ENCODE measurements at regions of chr6 and their contacts with region 1.

Region 1: DNA sequence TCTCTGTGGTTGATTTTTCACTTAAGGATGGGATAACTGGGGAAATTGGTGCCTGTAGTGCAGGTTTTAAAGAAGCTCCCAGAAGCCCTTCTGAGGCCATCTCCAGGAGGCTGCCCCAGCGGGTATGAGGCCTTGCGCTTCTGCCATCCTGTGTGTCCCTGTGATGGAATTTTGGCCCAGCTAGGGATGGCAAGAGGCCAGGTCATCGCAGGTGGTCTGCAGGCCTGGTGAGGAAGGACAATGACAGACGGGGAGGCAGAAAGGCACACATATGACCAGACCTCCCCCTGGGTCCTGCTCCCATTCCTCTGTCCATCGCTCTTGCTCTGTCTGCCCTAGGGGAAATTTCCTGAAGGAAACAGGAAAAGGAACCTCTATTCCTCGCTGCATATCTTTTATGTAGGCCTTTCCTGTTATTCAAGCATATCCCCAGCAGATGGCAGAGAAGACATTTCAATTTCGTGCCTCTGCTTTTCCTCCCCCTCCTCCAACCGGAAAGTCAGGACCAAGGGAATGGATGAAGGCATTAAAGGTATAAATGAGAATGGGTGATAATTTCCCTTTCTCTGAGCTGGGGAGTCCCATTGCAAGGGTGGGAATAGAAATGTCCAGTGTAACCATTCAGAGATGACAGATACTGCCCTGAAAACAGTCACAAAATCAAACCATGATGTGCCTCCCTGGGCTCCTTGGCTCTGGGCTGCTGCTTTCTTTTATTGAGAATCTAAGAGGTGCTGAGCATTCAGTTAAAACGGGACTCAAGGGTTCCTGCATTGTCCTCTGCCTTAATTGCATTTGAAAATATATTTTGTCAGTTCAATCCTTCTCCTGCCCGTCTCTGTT is 17.6 kb upstream of the HLA-F start:
- DNase-seq: peak in 4 of 14 experiments; percentile 29 to 70 (median 56)
- ATAC-seq: no peak
- H3K4me3 ChIP-seq: no peak overlapping the region
- H3K4me3 Mint-ChIP-seq: peak overlapping the region; percentile 63
- H3K27ac ChIP-seq: no peak overlapping the region
- H3K27ac Mint-ChIP-seq: peak overlapping the region; percentile 83
- H3K4me1 ChIP-seq: peaks cover 49% of the 10 kb centered on the region
- H3K4me1 Mint-ChIP-seq: peaks cover 57% of the 10 kb centered on the region
- H3K27me3 ChIP-seq: peaks cover 2 to 7% of the 10 kb centered on the region in 2 experiments
- H3K27me3 Mint-ChIP-seq: peaks cover 29% of the 10 kb centered on the region
- CTCF ChIP-seq: peak; percentile 90

Region 2: DNA sequence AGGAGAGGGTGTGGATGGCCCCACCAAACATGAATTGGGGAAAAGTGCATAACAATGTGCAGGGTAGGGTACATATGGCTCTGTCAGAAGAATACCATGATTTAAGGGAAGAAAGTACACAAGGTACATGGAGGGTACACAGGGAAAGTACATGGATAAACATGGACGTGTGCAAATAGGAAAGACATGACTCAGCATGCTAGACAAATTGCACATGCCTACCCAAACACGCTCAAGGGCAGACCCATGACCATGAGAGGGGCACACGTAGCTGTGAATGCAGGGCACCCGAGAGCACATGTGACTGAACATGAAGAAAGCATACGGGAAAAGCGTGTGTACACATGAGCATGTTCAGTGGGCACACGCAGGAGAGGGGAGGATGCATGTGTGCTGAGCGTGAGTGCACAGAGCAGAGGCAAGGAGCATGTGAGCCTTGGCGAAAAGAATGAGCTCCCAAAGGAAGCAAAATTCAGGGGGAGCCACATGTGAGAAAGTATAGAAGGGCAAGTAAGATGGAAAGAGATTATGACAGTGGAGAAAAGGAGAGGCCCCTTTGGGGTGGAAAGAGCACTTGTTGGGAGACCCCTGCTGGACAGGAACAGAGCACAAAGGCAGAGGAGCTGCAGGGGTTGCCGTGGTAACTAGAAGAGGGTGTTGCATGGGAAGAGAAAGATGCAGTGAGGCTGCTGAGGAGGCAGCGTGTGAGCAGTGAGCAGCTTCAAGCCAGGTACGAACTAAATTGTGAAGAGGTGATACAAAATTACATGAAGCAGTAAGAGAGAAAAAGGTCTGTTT is 102.8 kb before region 1 on chr6:
- CTCF ChIA-PET with region 1: no interaction called
- POLR2A ChIA-PET with region 1: no interaction called
- intact Hi-C with region 1: no loop called
- DNase-seq: peak in 2 of 14 experiments; percentile 6
- ATAC-seq: no peak
- H3K4me3 ChIP-seq: no peak overlapping the region
- H3K4me3 Mint-ChIP-seq: no peak overlapping the region
- H3K27ac ChIP-seq: no peak overlapping the region
- H3K27ac Mint-ChIP-seq: no peak overlapping the region
- H3K4me1 ChIP-seq: no peaks in the 10 kb centered on the region
- H3K4me1 Mint-ChIP-seq: no peaks in the 10 kb centered on the region
- H3K27me3 ChIP-seq: no peaks in the 10 kb centered on the region
- H3K27me3 Mint-ChIP-seq: no peaks in the 10 kb centered on the region
- CTCF ChIP-seq: no peak

Region 3: DNA sequence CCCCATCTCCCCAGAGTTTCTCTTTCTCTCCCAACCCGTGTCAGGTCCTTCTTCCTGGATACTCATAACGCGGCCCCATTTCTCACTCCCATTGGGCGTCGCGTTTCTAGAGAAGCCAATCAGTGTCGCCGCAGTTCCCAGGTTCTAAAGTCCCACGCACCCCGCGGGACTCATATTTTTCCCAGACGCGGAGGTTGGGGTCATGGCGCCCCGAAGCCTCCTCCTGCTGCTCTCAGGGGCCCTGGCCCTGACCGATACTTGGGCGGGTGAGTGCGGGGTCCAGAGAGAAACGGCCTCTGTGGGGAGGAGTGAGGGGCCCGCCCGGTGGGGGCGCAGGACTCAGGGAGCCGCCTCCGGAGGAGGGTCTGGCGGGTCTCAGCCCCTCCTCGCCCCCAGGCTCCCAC is 17.7 kb after region 1 on chr6 and contains the start of gene HLA-F:
- CTCF ChIA-PET with region 1: interaction called, 17 read pairs
- POLR2A ChIA-PET with region 1: interaction called, 65 read pairs
- intact Hi-C with region 1: no loop called
- DNase-seq: peak in 13 of 14 experiments; percentile 69 to 96 (median 79)
- ATAC-seq: peak; percentile 90
- H3K4me3 ChIP-seq: peak within 1 kb of the TSS; percentile 100
- H3K4me3 Mint-ChIP-seq: peak within 1 kb of the TSS; percentile 97
- H3K27ac ChIP-seq: peak within 1 kb of the TSS; percentile 99 to 100
- H3K27ac Mint-ChIP-seq: peak within 1 kb of the TSS; percentile 95
- H3K4me1 ChIP-seq: peaks cover 63% of the 10 kb centered on the region
- H3K4me1 Mint-ChIP-seq: peaks cover 70% of the 10 kb centered on the region
- H3K27me3 ChIP-seq: no peaks in the 10 kb centered on the region
- H3K27me3 Mint-ChIP-seq: no peaks in the 10 kb centered on the region
- CTCF ChIP-seq: no peak
- total RNA-seq, gene HLA-F: 560 TPM

Region 4: GRCh38 chr6:29737707-29738630 is 32.4 kb after region 1 on chr6:
- CTCF ChIA-PET with region 1: interaction called, 3 read pairs
- POLR2A ChIA-PET with region 1: interaction called, 21 read pairs
- intact Hi-C with region 1: loop called in 1 of 2 experiments (anchors 5 kb)
- DNase-seq: peak; percentile 60 to 89 (median 66)
- ATAC-seq: peak; percentile 90
- H3K4me3 ChIP-seq: no peak overlapping the region
- H3K4me3 Mint-ChIP-seq: no peak overlapping the region
- H3K27ac ChIP-seq: no peak overlapping the region
- H3K27ac Mint-ChIP-seq: no peak overlapping the region
- H3K4me1 ChIP-seq: peaks cover 3% of the 10 kb centered on the region
- H3K4me1 Mint-ChIP-seq: peaks cover 15% of the 10 kb centered on the region
- H3K27me3 ChIP-seq: no peaks in the 10 kb centered on the region
- H3K27me3 Mint-ChIP-seq: no peaks in the 10 kb centered on the region
- CTCF ChIP-seq: peak; percentile 91

Region 5: GRCh38 chr6:29752451-29753308 is 47.1 kb after region 1 on chr6:
- CTCF ChIA-PET with region 1: interaction called, 18 read pairs
- POLR2A ChIA-PET with region 1: interaction called, 37 read pairs
- intact Hi-C with region 1: loop called (anchors 1 kb)
- DNase-seq: peak; percentile 71 to 94 (median 79)
- ATAC-seq: peak; percentile 72
- H3K4me3 ChIP-seq: peak overlapping the region; percentile 75
- H3K4me3 Mint-ChIP-seq: peak overlapping the region; percentile 90
- H3K27ac ChIP-seq: peak overlapping the region; percentile 30 to 58
- H3K27ac Mint-ChIP-seq: peak overlapping the region; percentile 83
- H3K4me1 ChIP-seq: peaks cover 28% of the 10 kb centered on the region
- H3K4me1 Mint-ChIP-seq: peaks cover 42% of the 10 kb centered on the region
- H3K27me3 ChIP-seq: no peaks in the 10 kb centered on the region
- H3K27me3 Mint-ChIP-seq: no peaks in the 10 kb centered on the region
- CTCF ChIP-seq: peak; percentile 99

Region 6: DNA sequence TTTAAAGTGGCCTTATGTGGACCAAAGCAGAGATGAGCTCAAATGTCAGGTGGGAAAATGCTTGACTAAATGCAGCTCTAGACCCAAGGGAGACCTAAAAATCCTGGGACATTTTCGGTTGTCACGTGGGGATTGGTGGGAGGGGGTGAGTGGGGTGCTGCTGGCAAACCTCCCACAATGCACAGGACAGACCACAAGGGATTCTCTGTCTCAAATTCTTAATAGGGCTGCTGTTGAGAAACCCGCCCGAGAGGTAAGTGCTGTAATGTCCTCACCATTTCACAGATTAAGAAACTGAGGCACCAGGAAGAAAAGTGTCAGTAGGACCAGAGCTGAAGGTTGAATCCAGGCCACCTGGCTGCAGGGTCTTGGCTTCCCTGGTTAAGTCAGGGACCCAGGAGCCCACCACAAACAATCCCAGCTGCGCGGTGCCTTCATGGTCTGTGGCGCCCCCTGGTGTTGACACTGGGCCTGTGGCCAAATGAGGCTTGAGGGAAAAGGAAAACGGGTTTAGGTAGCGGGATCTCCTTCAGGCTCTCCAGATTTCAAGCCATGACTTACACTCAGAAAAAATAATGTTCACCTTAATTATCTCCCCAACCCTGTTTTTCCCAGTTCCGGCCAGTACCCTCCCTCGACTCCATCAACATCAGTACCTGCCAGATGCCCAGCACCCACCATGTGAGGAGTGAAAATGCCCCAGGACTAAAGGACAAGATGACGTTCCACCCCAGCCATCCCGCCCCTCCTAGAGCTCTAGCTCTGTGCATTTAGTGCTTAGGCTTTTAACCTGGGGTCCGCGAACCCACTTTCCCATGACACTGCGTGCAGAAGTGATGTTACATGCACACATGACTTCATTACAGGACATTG is 129.2 kb after region 1 on chr6:
- CTCF ChIA-PET with region 1: interaction called, 4 read pairs
- POLR2A ChIA-PET with region 1: interaction called, 3 read pairs
- intact Hi-C with region 1: loop called (anchors 1 kb)
- DNase-seq: peak; percentile 30 to 74 (median 52)
- ATAC-seq: peak; percentile 54
- H3K4me3 ChIP-seq: no peak overlapping the region
- H3K4me3 Mint-ChIP-seq: no peak overlapping the region
- H3K27ac ChIP-seq: no peak overlapping the region
- H3K27ac Mint-ChIP-seq: no peak overlapping the region
- H3K4me1 ChIP-seq: peaks cover 6% of the 10 kb centered on the region
- H3K4me1 Mint-ChIP-seq: no peaks in the 10 kb centered on the region
- H3K27me3 ChIP-seq: peaks cover 14 to 30% of the 10 kb centered on the region in 2 experiments
- H3K27me3 Mint-ChIP-seq: peaks cover 75% of the 10 kb centered on the region
- CTCF ChIP-seq: peak; percentile 83

Region 7: DNA sequence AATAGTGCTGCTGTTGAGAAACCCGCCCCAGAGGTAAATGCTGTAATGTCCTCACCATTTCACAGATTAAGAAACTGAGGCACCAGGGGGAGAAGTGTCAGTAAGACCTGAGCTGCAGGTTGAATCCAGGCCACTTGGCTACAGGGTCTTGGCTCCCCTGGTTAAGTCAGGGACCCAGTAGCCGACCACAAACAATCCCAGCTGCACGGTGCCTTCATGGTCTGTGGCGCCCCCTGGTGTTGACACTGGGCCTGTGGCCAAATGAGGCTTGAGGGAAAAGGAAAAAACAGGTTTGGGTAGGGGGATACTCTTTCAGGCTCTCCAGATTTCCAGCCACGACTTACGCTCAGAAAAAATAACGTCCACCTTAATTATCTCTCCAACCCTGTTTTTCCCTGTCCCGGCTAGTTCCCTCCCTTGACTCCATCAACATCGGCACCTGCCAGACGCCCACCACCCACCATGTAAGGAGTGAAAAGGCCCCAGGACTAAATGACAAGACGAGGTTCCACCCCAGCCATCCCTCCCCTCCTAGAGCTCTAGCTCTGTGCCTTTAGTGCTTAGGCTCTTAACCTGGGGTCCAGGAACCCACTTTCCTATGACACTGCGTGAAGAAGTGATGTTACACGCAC is 307.8 kb after region 1 on chr6:
- CTCF ChIA-PET with region 1: no interaction called
- POLR2A ChIA-PET with region 1: no interaction called
- intact Hi-C with region 1: loop called (anchors 5 to 10 kb)
- DNase-seq: peak in 9 of 14 experiments; percentile 3 to 71 (median 46)
- ATAC-seq: peak; percentile 56
- H3K4me3 ChIP-seq: no peak overlapping the region
- H3K4me3 Mint-ChIP-seq: no peak overlapping the region
- H3K27ac ChIP-seq: no peak overlapping the region
- H3K27ac Mint-ChIP-seq: no peak overlapping the region
- H3K4me1 ChIP-seq: no peaks in the 10 kb centered on the region
- H3K4me1 Mint-ChIP-seq: no peaks in the 10 kb centered on the region
- H3K27me3 ChIP-seq: peaks cover 11 to 16% of the 10 kb centered on the region in 2 experiments
- H3K27me3 Mint-ChIP-seq: peaks cover 30% of the 10 kb centered on the region
- CTCF ChIP-seq: peak; percentile 77

Measured in CD4-positive, alpha-beta T cell (primary cell).